Activated naive CD4-positive, alpha-beta T cell treated with anti-CD3 and anti-CD28 coated beads for 36 hours (primary cell): ENCODE measurements at regions of chr7 and their contacts with region 1.

Region 1: DNA sequence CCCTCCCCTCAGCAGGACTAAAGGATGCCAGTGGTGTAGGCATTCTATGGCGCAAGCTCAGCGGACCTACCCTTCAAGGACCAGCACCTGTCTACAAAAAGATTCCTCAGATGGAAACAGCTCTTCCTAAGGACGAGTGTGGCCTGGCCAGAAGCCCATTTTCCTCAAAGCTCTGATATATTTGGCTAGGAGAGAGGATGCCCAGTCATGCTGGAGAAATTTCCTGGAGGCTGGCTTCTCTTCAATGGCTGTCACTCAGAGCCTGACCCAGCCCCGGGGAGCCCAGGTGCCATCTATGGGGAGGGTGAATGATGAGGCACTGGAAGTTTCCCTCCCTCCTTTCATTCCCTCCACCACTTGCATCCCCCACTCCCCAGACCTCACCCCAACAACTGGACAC is 111.5 kb downstream of the PLXNA4 start:
- DNase-seq: no peak
- H3K4me3 Mint-ChIP-seq: no peak overlapping the region
- H3K27ac Mint-ChIP-seq: no peak overlapping the region
- H3K4me1 Mint-ChIP-seq: peaks cover 22% of the 10 kb centered on the region
- H3K27me3 Mint-ChIP-seq: no peaks in the 10 kb centered on the region

Region 2: GRCh38 chr7:131633342-131633843 is 831.4 kb before region 1 on chr7:
- CTCF ChIA-PET with region 1: no interaction called
- intact Hi-C with region 1: no loop called
- DNase-seq: no peak
- H3K4me3 Mint-ChIP-seq: no peak overlapping the region
- H3K27ac Mint-ChIP-seq: no peak overlapping the region
- H3K4me1 Mint-ChIP-seq: no peaks in the 10 kb centered on the region
- H3K27me3 Mint-ChIP-seq: peaks cover 6% of the 10 kb centered on the region

Region 3: DNA sequence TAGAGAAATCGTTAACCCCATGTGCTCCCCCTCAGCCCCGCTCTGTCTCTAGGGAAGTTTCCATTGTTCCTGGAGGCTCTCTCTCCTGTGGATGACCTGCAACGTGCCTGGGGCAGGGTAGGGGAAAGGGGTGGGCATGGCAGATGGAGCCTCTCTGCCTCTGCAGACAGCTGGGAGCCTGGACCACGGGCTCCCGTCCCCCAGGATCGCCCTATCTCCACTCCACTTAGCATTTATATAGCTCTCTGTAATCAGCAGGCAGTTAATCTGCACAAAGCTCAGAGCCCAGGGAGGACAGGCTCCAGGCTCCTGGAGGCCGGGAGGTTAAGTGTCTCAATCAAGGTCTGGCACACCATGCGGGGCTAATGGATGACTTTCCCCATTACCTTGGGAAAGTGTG is 258.2 kb before region 1 on chr7:
- CTCF ChIA-PET with region 1: no interaction called
- intact Hi-C with region 1: no loop called
- DNase-seq: no peak
- H3K4me3 Mint-ChIP-seq: no peak overlapping the region
- H3K27ac Mint-ChIP-seq: no peak overlapping the region
- H3K4me1 Mint-ChIP-seq: no peaks in the 10 kb centered on the region
- H3K27me3 Mint-ChIP-seq: peaks cover 6% of the 10 kb centered on the region

Region 4: DNA sequence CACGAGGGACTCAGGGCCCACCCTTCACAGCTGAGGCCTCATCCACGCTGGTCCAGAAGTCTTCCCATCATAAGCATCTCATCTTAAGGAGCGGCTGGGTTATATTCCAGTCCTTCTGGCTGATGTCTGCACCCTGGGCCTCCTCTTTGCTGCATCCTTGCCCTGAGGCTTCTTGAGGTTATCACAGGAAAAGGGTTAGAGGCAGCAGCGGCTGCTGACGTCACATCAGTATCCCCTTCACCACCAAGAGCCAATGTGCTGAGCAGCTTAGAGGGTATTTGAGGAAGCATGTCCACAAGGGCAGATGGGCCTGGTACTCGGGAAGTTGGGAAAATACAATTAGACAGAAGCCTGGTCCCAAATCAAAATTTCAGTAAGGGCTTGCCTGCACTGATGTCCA is 13.6 kb before region 1 on chr7:
- CTCF ChIA-PET with region 1: no interaction called
- intact Hi-C with region 1: loop called (anchors 1 kb)
- DNase-seq: no peak
- H3K4me3 Mint-ChIP-seq: no peak overlapping the region
- H3K27ac Mint-ChIP-seq: no peak overlapping the region
- H3K4me1 Mint-ChIP-seq: peaks cover 46% of the 10 kb centered on the region
- H3K27me3 Mint-ChIP-seq: no peaks in the 10 kb centered on the region

Region 5: DNA sequence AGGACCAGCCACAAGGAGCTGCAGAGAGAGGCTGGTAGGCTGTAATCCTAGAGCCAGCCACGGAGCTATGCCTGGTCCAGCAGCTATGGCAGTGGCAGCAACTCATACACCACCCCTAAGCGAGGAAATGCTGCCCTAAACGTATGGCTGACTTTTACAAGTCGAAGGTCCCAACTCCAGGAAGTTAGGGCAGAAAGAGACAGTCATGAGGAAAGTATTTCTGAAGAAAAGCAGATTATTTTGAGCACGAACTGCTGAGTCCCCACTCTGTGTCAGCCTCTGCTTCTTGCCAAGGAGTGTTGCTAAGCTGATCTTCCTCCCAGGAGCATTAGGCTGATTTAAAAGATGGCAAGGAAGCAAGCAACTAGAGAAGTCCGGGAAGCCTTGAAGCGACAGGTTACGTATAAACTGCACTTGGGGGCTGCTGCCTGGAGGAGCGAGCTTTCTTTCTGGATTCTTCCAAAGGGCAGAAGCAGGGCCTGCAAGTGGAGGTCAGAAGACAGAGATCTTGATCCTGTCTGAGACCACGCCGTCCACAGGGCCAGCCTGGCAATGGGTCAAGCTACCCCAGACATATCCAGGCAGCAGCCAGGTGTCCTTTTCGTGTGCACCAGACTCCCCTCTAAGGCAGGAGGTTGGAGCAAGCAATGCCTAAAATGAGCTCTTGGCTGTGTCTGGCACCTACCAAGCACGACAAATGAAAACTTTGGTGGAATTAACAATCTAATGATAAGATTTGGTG is 72.1 kb after region 1 on chr7:
- CTCF ChIA-PET with region 1: no interaction called
- intact Hi-C with region 1: no loop called
- DNase-seq: no peak
- H3K4me3 Mint-ChIP-seq: no peak overlapping the region
- H3K27ac Mint-ChIP-seq: no peak overlapping the region
- H3K4me1 Mint-ChIP-seq: no peaks in the 10 kb centered on the region
- H3K27me3 Mint-ChIP-seq: no peaks in the 10 kb centered on the region